ENCODE measurements at regions of chr10 and their contacts with region 1.

Region 1: DNA sequence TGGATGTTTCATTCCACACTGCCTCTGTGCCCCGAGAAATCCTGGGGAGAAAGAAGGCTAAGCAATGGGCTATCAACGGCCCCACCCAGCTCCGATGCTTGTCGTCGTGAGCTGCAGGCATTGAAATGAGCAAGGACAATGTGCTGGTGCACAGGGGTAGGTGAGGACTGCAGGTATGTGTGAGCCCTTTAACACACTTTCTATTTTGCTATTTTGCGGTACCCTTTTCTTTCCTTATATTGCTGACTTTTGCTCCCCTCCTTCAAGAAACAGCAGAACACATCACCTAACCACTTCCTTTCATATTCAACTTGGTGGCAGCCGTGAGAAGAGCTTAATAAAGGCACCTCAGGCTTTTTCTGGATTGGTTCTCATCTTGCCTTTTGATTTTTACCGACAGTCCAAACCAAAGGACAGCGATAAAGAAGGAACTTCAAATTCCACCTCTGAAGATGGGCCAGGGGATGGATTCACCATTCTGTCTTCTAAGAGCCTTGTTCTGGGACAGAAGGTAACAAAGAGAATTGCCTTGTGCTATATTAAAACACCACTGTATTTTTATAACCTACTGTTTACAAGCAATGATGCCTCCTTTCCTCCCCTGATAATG is 39.2 kb downstream of the AIFM2 start:
- DNase-seq: peak; percentile 37 to 51 (median 44)
- H3K4me3 ChIP-seq: peak overlapping the region; percentile 26 to 62
- H3K4me3 Mint-ChIP-seq: peak overlapping the region; percentile 76 to 87 (median 84)
- H3K27ac ChIP-seq: peak overlapping the region; percentile 61
- H3K27ac Mint-ChIP-seq: peak overlapping the region; percentile 83 to 98 (median 94)
- H3K4me1 ChIP-seq: peaks cover 45% of the 10 kb centered on the region
- H3K4me1 Mint-ChIP-seq: peaks cover 25 to 46% (median 37%) of the 10 kb centered on the region in 4 donors
- H3K27me3 ChIP-seq: no peaks in the 10 kb centered on the region
- H3K27me3 Mint-ChIP-seq: no peaks in the 10 kb centered on the region

Region 2: GRCh38 chr10:70106958-70107791 is 13.7 kb after region 1 on chr10:
- CTCF ChIA-PET with region 1: interaction called, 8 read pairs
- POLR2A ChIA-PET with region 1: interaction called, 16 read pairs
- intact Hi-C with region 1: no loop called
- DNase-seq: no peak
- H3K4me3 ChIP-seq: no peak overlapping the region
- H3K4me3 Mint-ChIP-seq: no peak overlapping the region
- H3K27ac ChIP-seq: no peak overlapping the region
- H3K27ac Mint-ChIP-seq: peak overlapping the region in 2 of 7 donors; percentile 36 to 41
- H3K4me1 ChIP-seq: no peaks in the 10 kb centered on the region
- H3K4me1 Mint-ChIP-seq: peaks cover 0 to 1% (median under 1%) of the 10 kb centered on the region in 4 donors
- H3K27me3 ChIP-seq: no peaks in the 10 kb centered on the region
- H3K27me3 Mint-ChIP-seq: no peaks in the 10 kb centered on the region

Region 3: DNA sequence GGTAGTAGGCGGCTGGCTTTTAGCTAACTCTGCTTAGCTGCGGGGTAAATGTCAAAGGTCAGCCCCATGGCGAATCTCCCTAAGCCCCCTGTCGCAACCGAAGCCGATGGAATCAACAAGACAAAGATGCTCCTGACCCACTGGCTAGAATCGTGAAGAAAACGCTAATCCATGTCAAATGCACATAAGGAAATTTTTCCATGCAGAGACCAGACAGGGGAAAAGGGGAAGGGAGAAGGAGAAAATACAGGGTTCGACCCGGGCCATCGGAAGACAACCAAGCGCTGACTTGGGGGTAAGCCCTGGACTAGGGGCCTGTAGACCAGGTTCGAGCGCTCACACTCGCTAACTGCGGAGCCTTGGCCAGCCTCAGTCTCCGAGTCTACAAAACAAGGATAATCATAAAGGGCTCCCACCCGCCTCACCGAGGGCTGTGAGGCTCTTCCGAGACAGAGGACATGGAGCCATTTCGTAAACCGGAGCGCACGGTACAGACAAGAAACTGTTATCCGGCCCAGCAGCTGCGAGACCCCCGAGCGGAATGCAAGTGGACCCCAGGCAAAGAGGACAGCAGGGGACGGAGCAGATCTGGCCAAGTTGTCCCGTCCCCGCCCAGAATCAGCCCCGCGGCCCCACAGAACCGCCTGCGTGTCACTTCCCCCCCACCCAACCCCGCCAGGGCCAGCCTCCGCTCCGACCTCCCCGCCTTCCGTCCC is 76.4 kb after region 1 on chr10:
- CTCF ChIA-PET with region 1: no interaction called
- POLR2A ChIA-PET with region 1: interaction called, 13 read pairs
- intact Hi-C with region 1: loop called (anchors 2 kb)
- DNase-seq: peak in 1 of 5 donors; percentile 38
- H3K4me3 ChIP-seq: peak overlapping the region; percentile 73 to 95
- H3K4me3 Mint-ChIP-seq: peak overlapping the region; percentile 90 to 97 (median 94)
- H3K27ac ChIP-seq: peak overlapping the region; percentile 93
- H3K27ac Mint-ChIP-seq: peak overlapping the region; percentile 90 to 99 (median 96)
- H3K4me1 ChIP-seq: peaks cover 76% of the 10 kb centered on the region
- H3K4me1 Mint-ChIP-seq: peaks cover 39 to 85% (median 54%) of the 10 kb centered on the region in 4 donors
- H3K27me3 ChIP-seq: no peaks in the 10 kb centered on the region
- H3K27me3 Mint-ChIP-seq: no peaks in the 10 kb centered on the region

Region 4: GRCh38 chr10:70255329-70256299 is 162.2 kb after region 1 on chr10:
- CTCF ChIA-PET with region 1: no interaction called
- POLR2A ChIA-PET with region 1: no interaction called
- intact Hi-C with region 1: no loop called
- DNase-seq: peak in 4 of 5 donors; percentile 4 to 18 (median 14)
- H3K4me3 ChIP-seq: no peak overlapping the region
- H3K4me3 Mint-ChIP-seq: peak overlapping the region; percentile 42 to 80 (median 74)
- H3K27ac ChIP-seq: no peak overlapping the region
- H3K27ac Mint-ChIP-seq: no peak overlapping the region
- H3K4me1 ChIP-seq: no peaks in the 10 kb centered on the region
- H3K4me1 Mint-ChIP-seq: peaks cover 2 to 16% (median 9%) of the 10 kb centered on the region in 4 donors
- H3K27me3 ChIP-seq: peaks cover 14% of the 10 kb centered on the region
- H3K27me3 Mint-ChIP-seq: peaks cover 30 to 37% of the 10 kb centered on the region in 2 donors

Region 5: GRCh38 chr10:70834441-70835151 is 741.2 kb after region 1 on chr10:
- CTCF ChIA-PET with region 1: no interaction called
- POLR2A ChIA-PET with region 1: no interaction called
- intact Hi-C with region 1: no loop called
- DNase-seq: no peak
- H3K4me3 ChIP-seq: no peak overlapping the region
- H3K4me3 Mint-ChIP-seq: no peak overlapping the region
- H3K27ac ChIP-seq: no peak overlapping the region
- H3K27ac Mint-ChIP-seq: peak overlapping the region in 1 of 7 donors; percentile 16
- H3K4me1 ChIP-seq: no peaks in the 10 kb centered on the region
- H3K4me1 Mint-ChIP-seq: peaks cover 12 to 32% (median 18%) of the 10 kb centered on the region in 4 donors
- H3K27me3 ChIP-seq: no peaks in the 10 kb centered on the region
- H3K27me3 Mint-ChIP-seq: no peaks in the 10 kb centered on the region